ENCODE measurements at regions of chr11 and their contacts with region 1.

Region 1: DNA sequence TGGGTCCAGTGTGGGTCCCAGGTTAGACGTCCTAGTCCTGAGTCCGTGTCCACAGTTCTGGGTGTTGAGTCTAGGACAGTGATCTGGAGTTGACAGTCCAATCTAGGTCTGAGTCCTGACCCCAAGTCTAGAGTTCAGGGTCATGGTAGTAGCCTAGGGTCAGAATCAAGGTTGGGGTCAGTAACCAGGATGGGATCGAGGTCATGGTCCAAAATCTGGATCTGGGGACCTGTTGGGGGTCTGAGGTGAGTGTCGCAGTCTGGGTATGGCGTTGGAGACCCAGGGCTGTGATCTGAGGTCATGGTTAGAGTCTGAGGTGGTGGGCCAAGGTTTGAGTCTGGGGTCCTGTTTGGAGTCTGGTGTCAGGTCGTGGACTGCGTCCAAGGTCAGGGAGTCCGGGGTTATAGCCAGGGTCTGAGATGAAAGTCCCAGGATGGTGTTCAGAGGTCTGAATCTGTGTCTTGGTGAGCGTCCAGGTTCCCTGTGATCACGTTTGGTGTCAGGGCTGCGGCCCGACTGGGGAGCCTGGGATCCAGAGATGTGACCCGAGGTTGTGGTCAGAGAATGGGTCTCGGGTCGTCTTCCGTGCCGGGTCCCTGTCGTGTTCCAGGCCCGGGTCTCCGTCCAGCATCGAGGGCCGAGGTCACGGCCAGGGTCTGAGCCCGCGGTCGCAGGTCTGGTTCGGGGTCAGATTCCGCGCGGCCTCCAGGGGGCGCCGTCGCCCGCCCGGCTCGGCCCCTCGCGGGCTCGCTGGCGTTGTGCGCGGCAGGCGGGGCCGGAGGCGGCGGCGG is 445 bp upstream of the GRK2 start:
- DNase-seq: peak; percentile 76
- ATAC-seq: peak; percentile 28
- H3K4me3 Mint-ChIP-seq: peak overlapping the region; percentile 66
- H3K27ac Mint-ChIP-seq: peak overlapping the region; percentile 61
- H3K4me1 Mint-ChIP-seq: peaks cover 62% of the 10 kb centered on the region
- H3K27me3 Mint-ChIP-seq: no peaks in the 10 kb centered on the region
- CTCF ChIP-seq: peak; percentile 61

Region 2: DNA sequence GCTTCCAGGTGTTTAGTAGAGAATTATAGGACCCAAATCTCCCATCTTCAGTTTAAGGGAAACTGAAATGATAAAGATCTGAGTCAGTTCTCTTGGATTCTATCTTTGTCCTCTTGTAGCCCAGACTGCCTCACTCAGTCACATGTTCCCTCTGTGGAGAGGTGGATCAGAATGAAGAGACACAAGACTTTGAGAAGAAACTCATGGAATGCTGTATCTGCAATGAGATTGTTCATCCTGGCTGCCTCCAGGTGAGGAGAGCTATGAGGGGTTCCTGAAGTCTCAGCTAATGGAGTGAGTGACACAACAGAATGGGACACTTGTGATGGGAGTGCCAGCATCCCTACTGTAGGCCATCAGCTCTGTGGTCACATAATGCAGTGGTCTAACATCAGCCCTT is 20.0 kb before region 1 on chr11:
- CTCF ChIA-PET with region 1: interaction called, 60 read pairs
- POLR2A ChIA-PET with region 1: interaction called, 38 read pairs
- intact Hi-C with region 1: no loop called
- DNase-seq: no peak
- ATAC-seq: no peak
- H3K4me3 Mint-ChIP-seq: no peak overlapping the region
- H3K27ac Mint-ChIP-seq: peak overlapping the region; percentile 50
- H3K4me1 Mint-ChIP-seq: peaks cover 47% of the 10 kb centered on the region
- H3K27me3 Mint-ChIP-seq: no peaks in the 10 kb centered on the region
- CTCF ChIP-seq: no peak

Region 3: DNA sequence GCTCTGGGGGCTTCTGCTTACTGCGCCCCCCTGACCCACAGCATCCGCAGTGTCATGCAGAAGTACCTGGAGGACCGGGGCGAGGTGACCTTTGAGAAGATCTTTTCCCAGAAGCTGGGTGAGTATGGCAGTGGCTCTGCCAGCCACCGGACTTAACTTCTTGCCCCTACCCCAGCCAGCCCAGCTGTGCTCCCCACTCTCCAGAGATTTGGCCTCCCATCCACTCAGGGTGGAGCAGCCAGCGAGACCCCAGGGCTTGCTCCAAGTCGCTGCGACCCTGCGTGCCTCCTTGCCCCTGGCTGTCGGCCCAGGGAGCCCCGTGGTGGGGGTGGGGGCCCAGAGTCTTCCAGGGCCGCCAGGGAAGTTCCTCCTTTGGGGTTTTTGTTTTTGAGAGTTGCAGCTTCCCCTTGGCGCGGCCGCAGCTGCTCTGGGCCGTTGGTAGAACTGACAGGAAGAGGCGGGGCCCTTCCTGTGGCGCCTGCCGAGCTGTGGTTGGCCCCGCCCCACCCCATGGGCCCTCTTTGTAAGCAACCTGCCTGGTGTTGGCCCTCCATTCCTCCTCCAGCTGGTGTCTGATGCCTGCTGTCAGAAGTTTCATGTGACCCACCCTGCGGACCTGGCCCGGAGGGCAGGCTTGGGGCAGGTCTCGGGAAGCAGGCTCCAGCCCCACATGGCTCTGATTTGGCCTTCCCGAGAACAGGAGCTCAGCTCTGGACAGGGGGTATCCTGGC is 11.6 kb after region 1 on chr11:
- CTCF ChIA-PET with region 1: interaction called, 15 read pairs
- POLR2A ChIA-PET with region 1: interaction called, 89 read pairs
- intact Hi-C with region 1: no loop called
- DNase-seq: peak; percentile 96
- ATAC-seq: peak; percentile 85
- H3K4me3 Mint-ChIP-seq: peak overlapping the region; percentile 71
- H3K27ac Mint-ChIP-seq: peak overlapping the region; percentile 97
- H3K4me1 Mint-ChIP-seq: peaks cover 53% of the 10 kb centered on the region
- H3K27me3 Mint-ChIP-seq: no peaks in the 10 kb centered on the region
- CTCF ChIP-seq: no peak

Region 4: GRCh38 chr11:67317205-67317887 is 51.5 kb after region 1 on chr11:
- CTCF ChIA-PET with region 1: interaction called, 65 read pairs
- POLR2A ChIA-PET with region 1: interaction called, 18 read pairs
- intact Hi-C with region 1: loop called (anchors 2 kb)
- DNase-seq: peak; percentile 98
- ATAC-seq: peak; percentile 91
- H3K4me3 Mint-ChIP-seq: peak overlapping the region; percentile 94
- H3K27ac Mint-ChIP-seq: peak overlapping the region; percentile 97
- H3K4me1 Mint-ChIP-seq: peaks cover 16% of the 10 kb centered on the region
- H3K27me3 Mint-ChIP-seq: no peaks in the 10 kb centered on the region
- CTCF ChIP-seq: peak; percentile 82

Region 5: DNA sequence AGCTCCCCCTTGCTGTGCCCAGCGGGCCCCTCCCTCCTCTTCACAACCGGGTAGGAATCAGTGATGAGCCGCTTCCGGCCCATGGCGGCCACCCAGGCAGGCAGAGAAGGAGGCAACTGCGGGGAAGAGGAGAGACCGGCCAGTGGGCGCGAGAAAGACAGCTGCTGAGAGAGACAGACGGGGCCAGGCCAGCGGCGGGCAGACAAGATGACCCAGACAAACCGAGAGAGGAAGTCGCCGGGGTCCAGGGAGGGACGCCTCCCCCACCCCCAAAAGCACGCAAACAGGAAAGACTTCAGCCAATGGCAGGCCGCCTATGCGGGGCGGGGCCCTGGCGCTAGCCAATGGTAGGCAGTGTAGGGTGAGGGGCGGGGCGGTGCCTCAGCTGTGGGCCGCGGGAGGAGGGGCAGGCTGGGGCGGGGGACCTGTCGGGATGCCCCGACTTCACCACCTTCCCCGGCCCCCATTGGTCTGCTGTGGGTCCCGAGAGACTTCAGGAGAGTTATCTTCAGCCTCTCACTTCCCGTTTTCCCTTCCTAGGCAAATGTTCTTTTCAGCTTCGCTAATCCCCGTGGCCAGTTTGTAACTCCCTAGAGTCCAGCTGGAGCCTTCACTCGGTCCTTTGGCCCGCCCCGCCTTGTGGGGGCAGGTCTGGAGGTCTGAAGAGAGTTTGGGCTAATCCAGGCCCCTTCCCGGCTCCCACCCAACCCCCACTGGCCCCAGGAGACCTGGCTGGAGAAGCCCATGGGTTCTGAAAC is 87.7 kb after region 1 on chr11 and contains the start of gene POLD4:
- CTCF ChIA-PET with region 1: interaction called, 53 read pairs
- POLR2A ChIA-PET with region 1: interaction called, 6 read pairs
- intact Hi-C with region 1: no loop called
- DNase-seq: peak; percentile 98
- ATAC-seq: peak; percentile 90
- H3K4me3 Mint-ChIP-seq: peak within 1 kb of the TSS; percentile 83
- H3K27ac Mint-ChIP-seq: peak within 1 kb of the TSS; percentile 98
- H3K4me1 Mint-ChIP-seq: peaks cover 38% of the 10 kb centered on the region
- H3K27me3 Mint-ChIP-seq: peaks cover 3% of the 10 kb centered on the region
- CTCF ChIP-seq: no peak
- total RNA-seq, gene POLD4: 34.1 to 36.1 TPM

Region 6: DNA sequence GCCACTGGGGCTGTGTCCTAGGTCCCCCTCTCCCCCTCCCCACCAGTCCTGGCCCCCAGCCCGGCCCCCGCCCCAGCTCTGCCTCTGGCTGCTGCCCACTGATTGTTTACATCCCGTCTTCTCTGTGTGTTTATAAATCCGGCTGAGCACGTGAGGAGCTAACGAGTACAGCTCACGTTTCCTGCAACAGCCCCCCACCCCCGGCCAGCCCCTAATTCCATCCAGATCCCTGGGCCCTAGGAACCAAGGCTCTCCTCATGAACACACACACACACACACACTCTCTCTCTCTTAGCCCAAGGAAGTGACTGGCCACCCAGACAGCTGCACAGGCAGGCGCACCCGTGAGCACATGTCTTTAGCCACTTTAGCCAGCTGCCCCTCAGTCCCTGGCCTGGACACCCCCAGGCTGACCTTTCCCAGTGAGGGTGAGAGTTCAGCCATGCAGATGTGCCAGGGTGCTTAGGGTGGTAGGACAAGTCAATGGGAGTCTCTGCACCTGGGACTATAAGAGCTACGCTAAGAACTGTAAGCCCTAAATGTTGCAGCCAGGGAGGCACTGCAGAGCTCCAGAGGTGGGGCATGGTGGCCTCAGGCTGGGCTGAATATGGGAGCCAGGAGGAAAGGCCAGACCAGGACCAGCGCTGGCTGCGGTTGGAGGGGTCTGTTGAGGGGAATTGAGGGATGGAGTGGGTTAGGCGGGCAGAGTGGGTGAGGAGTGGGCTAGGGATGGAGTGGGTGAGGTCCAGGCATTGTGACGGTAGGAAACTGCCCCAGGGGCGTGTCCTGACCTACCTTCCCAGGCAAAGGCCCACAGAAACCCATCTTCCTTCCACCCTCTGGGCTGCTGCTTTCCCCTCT is 104.8 kb after region 1 on chr11:
- CTCF ChIA-PET with region 1: no interaction called
- POLR2A ChIA-PET with region 1: no interaction called
- intact Hi-C with region 1: no loop called
- DNase-seq: no peak
- ATAC-seq: no peak
- H3K4me3 Mint-ChIP-seq: no peak overlapping the region
- H3K27ac Mint-ChIP-seq: no peak overlapping the region
- H3K4me1 Mint-ChIP-seq: peaks cover 53% of the 10 kb centered on the region
- H3K27me3 Mint-ChIP-seq: peaks cover 23% of the 10 kb centered on the region
- CTCF ChIP-seq: no peak